ENCODE measurements at regions of chr14 and their contacts with region 1.

Region 1: GRCh38 chr14:65438266-65438933 is 25.9 kb downstream of the FUT8 start:
- DNase-seq: peak in 3 of 4 experiments; percentile 8 to 66 (median 15)
- ATAC-seq: peak; percentile 69
- H3K4me3 ChIP-seq: no peak overlapping the region
- H3K27ac ChIP-seq: peak overlapping the region; percentile 80
- H3K4me1 ChIP-seq: peaks cover 6 to 50% of the 10 kb centered on the region in 2 experiments; a peak in 4 of 5 replicates
- H3K27me3 ChIP-seq: no peaks in the 10 kb centered on the region
- CTCF ChIP-seq: no peak
- EP300 ChIP-seq: peak; percentile 74; the same call in 1 of the 2 replicates
- POLR2A ChIP-seq: no peak
- RAD21 ChIP-seq: no peak

Region 2: DNA sequence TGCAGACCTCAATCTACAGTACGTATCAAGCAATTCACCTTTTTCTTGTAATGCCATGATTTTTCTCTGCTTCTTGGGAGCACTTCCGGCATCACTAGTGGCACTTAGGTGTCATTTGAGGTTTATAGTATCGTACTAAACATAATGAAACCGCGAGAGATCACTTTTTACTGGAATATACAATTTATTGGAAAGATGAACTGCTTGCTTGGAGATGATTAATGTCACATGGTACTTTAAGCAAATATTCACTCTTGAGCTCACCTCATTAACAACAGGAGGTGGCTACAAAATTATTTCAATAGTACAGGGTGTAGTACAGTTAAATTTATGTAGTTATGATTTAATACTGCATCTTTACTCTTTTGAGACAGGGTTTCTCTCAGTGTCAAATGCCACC is 14.4 kb before region 1 on chr14:
- CTCF ChIA-PET with region 1: no interaction called
- POLR2A ChIA-PET with region 1: interaction called, 5 read pairs
- in situ Hi-C with region 1: no loop called
- intact Hi-C with region 1: loop called (anchors 2 kb)
- DNase-seq: no peak
- ATAC-seq: no peak
- H3K4me3 ChIP-seq: no peak overlapping the region
- H3K27ac ChIP-seq: no peak overlapping the region
- H3K4me1 ChIP-seq: peaks cover 2 to 8% of the 10 kb centered on the region in 2 experiments; a peak in 3 of 5 replicates
- H3K27me3 ChIP-seq: no peaks in the 10 kb centered on the region
- CTCF ChIP-seq: no peak
- EP300 ChIP-seq: no peak
- POLR2A ChIP-seq: no peak
- RAD21 ChIP-seq: no peak

Region 3: DNA sequence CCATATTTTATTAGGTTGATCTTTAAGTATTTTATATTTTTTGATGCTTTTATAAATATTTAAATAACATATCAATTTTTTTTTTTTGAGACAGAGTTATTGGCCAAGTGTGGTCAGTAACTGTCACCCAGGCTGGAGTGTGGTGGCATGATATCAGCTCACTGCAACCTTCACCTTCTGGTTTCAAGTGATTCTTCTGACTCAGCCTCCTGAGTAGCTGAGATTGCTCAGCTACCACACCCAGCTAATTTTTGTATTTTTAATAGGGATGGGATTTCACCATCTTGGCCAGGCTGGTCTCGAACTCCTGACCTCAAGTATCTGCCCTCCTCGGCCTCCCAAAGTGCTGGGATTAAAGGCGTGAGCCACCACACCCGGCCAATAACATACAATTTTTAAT is 45.2 kb after region 1 on chr14:
- CTCF ChIA-PET with region 1: no interaction called
- POLR2A ChIA-PET with region 1: no interaction called
- in situ Hi-C with region 1: no loop called
- intact Hi-C with region 1: loop called (anchors 5 kb)
- DNase-seq: peak in 2 of 4 experiments; percentile 19 to 61
- ATAC-seq: peak; percentile 62
- H3K4me3 ChIP-seq: no peak overlapping the region
- H3K27ac ChIP-seq: peak overlapping the region; percentile 56; the same call in 1 of the 3 replicates
- H3K4me1 ChIP-seq: peaks cover 0 to 12% of the 10 kb centered on the region in 2 experiments; a peak in 2 of 5 replicates
- H3K27me3 ChIP-seq: no peaks in the 10 kb centered on the region
- CTCF ChIP-seq: no peak
- EP300 ChIP-seq: peak; percentile 57; the same call in 1 of the 2 replicates
- POLR2A ChIP-seq: no peak
- RAD21 ChIP-seq: no peak

Region 4: GRCh38 chr14:65620195-65620594 is 181.8 kb after region 1 on chr14:
- CTCF ChIA-PET with region 1: no interaction called
- POLR2A ChIA-PET with region 1: no interaction called
- in situ Hi-C with region 1: no loop called
- intact Hi-C with region 1: no loop called
- DNase-seq: no peak
- ATAC-seq: no peak
- H3K4me3 ChIP-seq: no peak overlapping the region
- H3K27ac ChIP-seq: no peak overlapping the region
- H3K4me1 ChIP-seq: no peaks in the 10 kb centered on the region
- H3K27me3 ChIP-seq: no peaks in the 10 kb centered on the region
- CTCF ChIP-seq: no peak
- EP300 ChIP-seq: no peak
- POLR2A ChIP-seq: no peak
- RAD21 ChIP-seq: no peak

Measured in K562 (cell line).